ENCODE measurements at regions of chr5 and their contacts with region 1.

Region 1: DNA sequence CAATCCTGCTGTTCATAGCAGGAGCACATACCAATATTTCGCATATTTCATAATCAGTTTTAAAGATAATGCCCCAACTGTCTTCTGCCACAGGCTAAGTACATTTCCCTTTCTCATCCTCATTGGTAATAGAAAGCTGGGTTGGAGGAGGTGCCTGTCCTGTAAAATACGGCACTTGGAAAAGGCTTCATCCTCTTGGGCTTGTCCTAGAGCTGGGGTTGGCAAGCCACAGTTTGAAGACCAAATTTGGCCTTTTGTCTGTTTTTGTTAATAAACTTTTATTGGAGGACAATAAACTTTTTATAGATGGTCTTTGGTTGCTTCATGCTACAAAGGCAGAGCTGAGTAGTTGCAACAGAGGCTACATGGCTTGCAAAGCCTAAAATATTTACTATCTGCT is 997.8 kb upstream of the CDH18 start:
- DNase-seq: no peak
- H3K4me3 ChIP-seq: no peak overlapping the region
- H3K27ac ChIP-seq: no peak overlapping the region
- H3K4me1 ChIP-seq: no peaks in the 10 kb centered on the region
- H3K27me3 ChIP-seq: no peaks in the 10 kb centered on the region
- CTCF ChIP-seq: no peak

Region 2: DNA sequence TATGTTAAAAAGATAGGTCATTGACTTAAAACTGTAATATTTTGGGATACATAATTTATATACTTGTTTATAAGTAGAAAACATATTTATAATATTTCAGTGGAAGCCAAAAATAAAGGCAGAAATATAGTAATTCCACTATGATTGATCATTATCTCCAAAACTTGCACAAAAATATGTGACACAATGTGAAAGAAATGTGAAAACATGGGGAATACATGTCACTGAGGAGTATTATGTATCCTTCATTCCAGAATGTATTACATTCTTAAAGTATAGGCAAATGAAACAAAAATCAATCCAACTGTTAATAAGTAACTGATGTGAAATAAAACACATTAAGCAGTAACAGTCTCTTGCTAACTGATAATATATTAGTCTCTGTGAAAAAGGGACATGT is 1234.4 kb before region 1 on chr5:
- intact Hi-C with region 1: no loop called
- DNase-seq: no peak
- H3K4me3 ChIP-seq: no peak overlapping the region
- H3K27ac ChIP-seq: no peak overlapping the region
- H3K4me1 ChIP-seq: no peaks in the 10 kb centered on the region
- H3K27me3 ChIP-seq: no peaks in the 10 kb centered on the region
- CTCF ChIP-seq: no peak

Region 3: GRCh38 chr5:21007766-21008165 is 22.0 kb after region 1 on chr5:
- intact Hi-C with region 1: loop called (anchors 2 kb)
- DNase-seq: no peak
- H3K4me3 ChIP-seq: no peak overlapping the region
- H3K27ac ChIP-seq: no peak overlapping the region
- H3K4me1 ChIP-seq: no peaks in the 10 kb centered on the region
- H3K27me3 ChIP-seq: no peaks in the 10 kb centered on the region
- CTCF ChIP-seq: no peak

Measured in tibial artery (tissue), 4 donors.